ENCODE measurements at regions of chr22 and their contacts with region 1.

Region 1: GRCh38 chr22:38681784-38682335 is at the start of gene TOMM22:
- DNase-seq: peak; percentile 77 to 87 (median 79)
- H3K4me3 ChIP-seq: peak within 1 kb of the TSS; percentile 95
- H3K4me3 Mint-ChIP-seq: peak within 1 kb of the TSS; percentile 95 to 99 (median 99)
- H3K27ac ChIP-seq: peak within 1 kb of the TSS; percentile 85
- H3K27ac Mint-ChIP-seq: peak within 1 kb of the TSS; percentile 95 to 100 (median 98)
- H3K4me1 ChIP-seq: peaks cover 14% of the 10 kb centered on the region
- H3K4me1 Mint-ChIP-seq: peaks cover 17 to 23% (median 21%) of the 10 kb centered on the region in 3 donors
- H3K27me3 ChIP-seq: no peaks in the 10 kb centered on the region
- H3K27me3 Mint-ChIP-seq: peaks cover 0 to 1% of the 10 kb centered on the region in 2 donors
- total RNA-seq, gene TOMM22: 207 to 210 TPM

Region 2: DNA sequence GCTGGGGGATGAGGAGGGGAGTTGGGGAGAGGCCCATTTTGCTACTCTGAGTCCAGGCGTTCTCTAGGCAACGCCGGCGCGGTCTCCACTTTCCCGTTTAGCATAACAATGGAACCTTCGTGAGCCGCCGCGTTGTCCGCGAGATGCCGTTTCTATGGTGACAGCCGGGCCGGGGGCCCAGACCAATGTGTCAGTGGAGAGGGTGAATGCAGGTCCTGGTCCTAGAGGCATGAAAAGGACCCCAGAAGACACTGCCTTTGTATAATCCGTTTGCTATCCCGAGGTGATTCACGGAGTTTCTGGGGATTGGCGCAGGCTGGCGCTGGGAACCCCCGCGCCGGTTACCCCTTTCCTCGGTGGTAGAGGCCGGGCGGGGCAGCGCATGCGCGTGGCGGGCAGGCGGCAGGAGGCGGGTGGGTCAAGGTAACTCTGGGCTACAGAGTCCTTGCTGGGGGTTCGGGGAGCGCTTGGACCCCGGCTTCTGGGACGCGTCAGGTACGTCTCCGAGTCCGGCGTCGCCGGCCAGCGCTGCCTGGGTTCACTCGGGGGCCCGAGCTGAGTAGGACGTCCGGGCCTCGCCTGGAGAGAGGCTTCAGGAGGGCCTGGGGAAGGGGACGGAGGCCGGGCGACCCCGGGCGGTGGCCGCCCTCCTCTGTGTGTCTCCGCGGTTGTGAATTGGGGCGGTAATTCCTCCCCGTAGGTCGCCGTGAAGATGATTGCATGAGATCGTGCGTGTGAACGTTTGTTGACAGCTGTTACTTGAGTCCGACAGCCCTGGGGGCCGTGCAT is 25.4 kb before region 1 on chr22 and contains the starts of genes CBY1 and FAM227A:
- CTCF ChIA-PET with region 1: interaction called, 18 read pairs
- POLR2A ChIA-PET with region 1: no interaction called
- DNase-seq: peak; percentile 82 to 91 (median 83)
- H3K4me3 ChIP-seq: peak within 1 kb of the TSS; percentile 88
- H3K4me3 Mint-ChIP-seq: peak within 1 kb of the TSS; percentile 94 to 97 (median 96)
- H3K27ac ChIP-seq: peak within 1 kb of the TSS; percentile 96
- H3K27ac Mint-ChIP-seq: peak within 1 kb of the TSS; percentile 96 to 99 (median 99)
- H3K4me1 ChIP-seq: peaks cover 12% of the 10 kb centered on the region
- H3K4me1 Mint-ChIP-seq: peaks cover 8 to 29% (median 19%) of the 10 kb centered on the region in 3 donors
- H3K27me3 ChIP-seq: no peaks in the 10 kb centered on the region
- H3K27me3 Mint-ChIP-seq: peaks cover 0 to 1% of the 10 kb centered on the region in 2 donors
- total RNA-seq, gene CBY1: 14.0 to 15.1 TPM
- total RNA-seq, gene FAM227A: 0.75 to 0.92 TPM

Region 3: DNA sequence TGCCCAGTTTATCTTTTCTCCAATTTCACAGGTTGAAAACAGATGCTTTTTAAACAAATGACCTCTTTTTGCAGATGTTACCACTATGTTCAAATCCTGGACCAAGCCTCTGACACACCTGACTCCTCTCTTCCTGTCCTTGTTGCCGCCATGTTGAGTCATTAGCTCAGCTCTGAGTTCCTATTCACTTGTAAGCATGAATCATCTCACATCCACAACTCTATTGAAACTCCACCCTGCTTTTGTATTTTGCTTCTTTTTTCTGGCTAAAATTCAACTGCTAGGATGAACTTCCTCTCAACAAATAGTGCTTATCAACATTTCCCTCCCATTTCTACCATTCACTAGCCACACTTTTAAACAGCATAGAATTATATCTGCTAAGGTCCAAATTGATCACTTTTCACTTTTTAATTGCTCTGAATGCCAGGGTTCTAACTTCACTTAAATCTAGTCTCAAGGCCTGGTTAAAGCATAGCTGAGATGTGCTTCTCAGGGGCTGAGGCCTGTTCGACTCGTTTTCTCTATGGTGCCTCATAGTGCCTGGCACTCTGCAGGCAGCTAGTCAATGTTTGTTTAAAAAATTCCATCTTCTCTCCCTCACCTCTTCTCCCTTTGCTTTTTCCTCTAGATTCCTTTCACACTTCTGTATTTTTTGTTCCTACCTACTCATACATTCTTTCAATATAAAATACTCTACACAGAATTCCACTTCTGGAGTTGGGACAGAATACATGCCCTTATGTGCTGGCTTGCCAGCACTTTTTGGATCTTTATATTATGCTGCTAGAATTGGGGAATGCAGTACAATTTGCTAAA is 15.0 kb after region 1 on chr22:
- CTCF ChIA-PET with region 1: interaction called, 19 read pairs
- POLR2A ChIA-PET with region 1: interaction called, 12 read pairs
- DNase-seq: peak in 1 of 5 donors; percentile 57
- H3K4me3 ChIP-seq: no peak overlapping the region
- H3K4me3 Mint-ChIP-seq: peak overlapping the region in 5 of 7 donors; percentile 1 to 90 (median 40)
- H3K27ac ChIP-seq: no peak overlapping the region
- H3K27ac Mint-ChIP-seq: peak overlapping the region; percentile 54 to 100 (median 88)
- H3K4me1 ChIP-seq: peaks cover 52% of the 10 kb centered on the region
- H3K4me1 Mint-ChIP-seq: peaks cover 56 to 88% (median 79%) of the 10 kb centered on the region in 3 donors
- H3K27me3 ChIP-seq: no peaks in the 10 kb centered on the region
- H3K27me3 Mint-ChIP-seq: peaks cover 0 to 6% of the 10 kb centered on the region in 2 donors

Region 4: DNA sequence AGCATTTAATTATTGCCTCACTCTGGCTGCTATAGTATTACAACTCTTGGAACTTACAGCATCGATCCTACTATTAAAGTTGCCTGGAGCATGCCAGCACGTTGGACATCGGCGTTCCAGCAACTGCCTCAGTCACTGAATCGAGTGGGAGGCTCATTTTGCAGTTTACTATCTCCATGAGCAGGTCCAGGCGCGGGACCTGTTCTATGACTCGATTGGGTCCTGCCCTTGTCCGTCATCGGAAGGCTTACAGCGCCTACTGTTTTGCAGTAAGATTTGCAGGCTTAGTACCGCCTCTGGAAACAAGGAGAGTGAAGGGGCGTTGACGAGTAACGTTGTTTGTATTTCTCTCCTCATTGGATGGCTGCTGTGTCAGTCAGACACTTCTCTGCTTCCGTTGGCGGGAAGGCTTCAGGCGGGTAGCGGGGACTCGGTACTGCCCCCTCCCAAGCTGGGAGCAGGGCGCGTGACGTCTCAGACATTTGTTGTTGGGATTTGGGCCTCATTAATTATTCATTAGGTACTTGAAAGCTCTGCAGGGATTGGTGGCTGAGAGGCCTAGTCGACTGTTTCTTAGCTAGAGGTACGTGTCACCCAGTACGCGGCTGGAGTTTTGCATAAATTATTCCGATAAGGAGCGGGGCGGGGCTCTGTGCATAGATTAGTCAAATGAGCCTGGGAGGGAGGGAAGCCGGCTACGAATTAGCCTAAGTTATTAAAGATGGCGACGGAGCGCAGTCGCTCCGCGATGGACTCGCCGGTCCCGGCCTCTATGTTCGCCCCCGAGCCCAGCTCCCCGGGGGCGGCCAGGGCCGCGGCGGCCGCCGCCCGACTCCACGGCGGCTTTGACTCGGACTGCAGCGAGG is 23.6 kb after region 1 on chr22 and contains the start of gene GTPBP1:
- CTCF ChIA-PET with region 1: interaction called, 19 read pairs
- POLR2A ChIA-PET with region 1: interaction called, 10 read pairs
- DNase-seq: peak; percentile 94 to 99 (median 98)
- H3K4me3 ChIP-seq: peak within 1 kb of the TSS; percentile 82
- H3K4me3 Mint-ChIP-seq: peak within 1 kb of the TSS; percentile 91 to 95 (median 93)
- H3K27ac ChIP-seq: peak within 1 kb of the TSS; percentile 74
- H3K27ac Mint-ChIP-seq: peak within 1 kb of the TSS; percentile 89 to 100 (median 98)
- H3K4me1 ChIP-seq: peaks cover 48% of the 10 kb centered on the region
- H3K4me1 Mint-ChIP-seq: peaks cover 55 to 69% (median 60%) of the 10 kb centered on the region in 3 donors
- H3K27me3 ChIP-seq: no peaks in the 10 kb centered on the region
- H3K27me3 Mint-ChIP-seq: peaks cover 0 to 5% of the 10 kb centered on the region in 2 donors
- total RNA-seq, gene GTPBP1: 62.7 to 63.7 TPM

Measured in CD8-positive, alpha-beta memory T cell (primary cell).